ENCODE measurements at regions of chr19 and their contacts with region 1.

Region 1: GRCh38 chr19:3970808-3971598 is at the start of gene DAPK3:
- DNase-seq: peak; percentile 99
- H3K4me3 ChIP-seq: peak within 1 kb of the TSS; percentile 95 to 100 (median 98)
- H3K27ac ChIP-seq: peak within 1 kb of the TSS; percentile 100
- H3K4me1 ChIP-seq: peaks cover 0 to 48% (median 42%) of the 10 kb centered on the region in 4 donors
- H3K27me3 ChIP-seq: no peaks in the 10 kb centered on the region
- CTCF ChIP-seq: no peak
- EP300 ChIP-seq: no peak
- POLR2A ChIP-seq: peak; percentile 80 to 93
- total RNA-seq, gene DAPK3: 91.3 to 167 (median 125) TPM

Region 2: DNA sequence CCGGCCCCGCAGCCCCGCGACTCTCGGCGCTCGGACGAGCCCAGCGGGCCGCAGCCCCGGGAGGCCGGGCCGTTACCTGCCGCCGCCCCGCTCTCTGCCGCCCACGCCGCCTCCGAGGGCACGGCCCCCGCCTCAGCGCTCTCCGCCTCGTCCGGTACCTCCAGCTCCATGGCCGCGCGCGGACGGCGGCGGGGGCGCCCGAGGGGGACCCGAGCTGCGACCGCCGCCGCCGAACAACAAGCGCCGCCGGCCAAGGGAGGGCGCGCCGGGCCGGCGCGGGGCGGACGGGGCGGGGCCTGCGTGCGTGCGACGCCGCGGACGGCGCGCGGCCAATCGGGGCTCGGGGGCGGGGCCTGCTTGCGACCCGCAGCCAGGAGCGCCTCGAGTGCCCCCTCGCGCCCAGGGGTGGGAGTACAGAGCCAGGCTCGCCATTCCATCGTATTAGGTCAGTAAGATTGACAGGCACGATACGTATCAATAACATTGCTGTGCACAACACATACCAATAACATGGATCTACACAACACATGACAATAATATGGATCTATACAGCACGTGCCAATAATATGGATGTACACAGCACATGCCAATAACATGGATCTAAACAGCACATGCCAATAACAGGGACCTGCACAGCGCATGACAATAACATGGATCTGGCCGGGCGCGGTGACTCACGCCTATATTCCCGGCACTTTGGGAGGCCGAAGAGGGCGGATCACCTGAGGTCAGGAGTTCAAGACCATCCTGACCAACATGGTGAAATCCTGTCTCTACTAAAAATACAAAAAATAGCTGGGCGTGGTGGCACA is 270.6 kb before region 1 on chr19 and contains the start of gene PIP5K1C:
- intact Hi-C with region 1: loop called (anchors 10 kb)
- DNase-seq: peak; percentile 94
- H3K4me3 ChIP-seq: peak within 1 kb of the TSS; percentile 64 to 98 (median 95)
- H3K27ac ChIP-seq: peak within 1 kb of the TSS; percentile 85 to 99 (median 92)
- H3K4me1 ChIP-seq: peaks cover 0 to 29% (median 24%) of the 10 kb centered on the region in 4 donors
- H3K27me3 ChIP-seq: no peaks in the 10 kb centered on the region
- CTCF ChIP-seq: peak; percentile 72 to 82 (median 74)
- EP300 ChIP-seq: no peak
- POLR2A ChIP-seq: no peak
- total RNA-seq, gene PIP5K1C: 27.8 to 68.7 (median 44.2) TPM

Region 3: DNA sequence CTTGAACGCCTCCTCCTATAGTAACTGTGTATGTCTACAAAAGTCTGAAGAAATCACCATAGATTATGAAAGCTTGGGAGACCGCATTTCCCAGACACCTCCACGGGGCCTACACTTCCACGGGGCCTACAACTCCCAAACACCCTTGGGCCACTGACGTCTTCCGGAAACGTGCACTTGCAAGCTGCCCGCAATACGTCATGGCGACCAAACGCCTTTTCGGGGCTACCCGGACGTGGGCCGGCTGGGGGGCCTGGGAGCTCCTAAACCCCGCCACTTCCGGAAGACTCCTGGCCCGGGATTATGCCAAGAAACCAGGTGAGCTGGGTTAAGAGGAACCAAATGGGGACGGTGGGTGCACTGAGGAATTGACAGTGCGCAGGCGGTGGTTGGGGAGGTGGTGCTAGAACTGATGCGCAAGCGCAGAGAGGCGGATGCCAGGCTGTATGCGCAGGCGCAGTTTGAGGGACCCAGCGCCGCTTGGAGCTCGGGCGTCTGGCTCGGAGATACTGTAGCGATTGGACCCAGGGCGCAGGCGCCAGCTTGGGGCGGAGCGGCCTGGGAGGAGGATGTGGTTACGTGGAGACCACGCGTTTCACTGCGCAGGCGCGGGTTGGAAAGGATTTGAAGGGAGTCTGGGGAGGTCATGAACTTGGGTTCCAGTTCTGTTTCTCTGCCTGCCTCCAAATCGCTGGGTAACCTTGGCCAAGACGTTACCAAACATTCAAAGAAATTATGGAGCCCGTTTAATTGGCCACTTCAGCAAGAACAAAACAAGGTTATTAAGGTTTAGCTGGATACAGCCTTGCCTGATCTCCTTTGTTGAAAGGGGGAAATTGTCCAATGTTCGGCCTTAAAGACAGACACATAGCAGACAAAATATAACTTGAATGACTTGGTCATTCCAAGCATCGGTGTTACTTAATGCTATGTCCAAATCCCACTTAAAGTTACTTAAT is 208.2 kb before region 1 on chr19 and contains the start of gene MRPL54:
- intact Hi-C with region 1: loop called (anchors 5 kb)
- DNase-seq: peak; percentile 100
- H3K4me3 ChIP-seq: peak within 1 kb of the TSS; percentile 78 to 92 (median 88)
- H3K27ac ChIP-seq: peak within 1 kb of the TSS; percentile 95 to 98 (median 96)
- H3K4me1 ChIP-seq: peaks cover 0 to 46% (median 37%) of the 10 kb centered on the region in 4 donors
- H3K27me3 ChIP-seq: no peaks in the 10 kb centered on the region
- CTCF ChIP-seq: no peak
- EP300 ChIP-seq: peak in 1 of 4 donors; percentile 44
- POLR2A ChIP-seq: peak in 1 of 2 donors; percentile 73
- total RNA-seq, gene MRPL54: 80.6 to 123 (median 103) TPM

Region 4: GRCh38 chr19:4014541-4015491 is 43.8 kb after region 1 on chr19:
- intact Hi-C with region 1: no loop called
- DNase-seq: peak; percentile 77
- H3K4me3 ChIP-seq: peak overlapping the region in 3 of 4 donors; percentile 6 to 35 (median 32)
- H3K27ac ChIP-seq: peak overlapping the region; percentile 68 to 86 (median 84)
- H3K4me1 ChIP-seq: peaks cover 0 to 91% (median 90%) of the 10 kb centered on the region in 4 donors
- H3K27me3 ChIP-seq: no peaks in the 10 kb centered on the region
- CTCF ChIP-seq: no peak
- EP300 ChIP-seq: no peak
- POLR2A ChIP-seq: no peak

Region 5: DNA sequence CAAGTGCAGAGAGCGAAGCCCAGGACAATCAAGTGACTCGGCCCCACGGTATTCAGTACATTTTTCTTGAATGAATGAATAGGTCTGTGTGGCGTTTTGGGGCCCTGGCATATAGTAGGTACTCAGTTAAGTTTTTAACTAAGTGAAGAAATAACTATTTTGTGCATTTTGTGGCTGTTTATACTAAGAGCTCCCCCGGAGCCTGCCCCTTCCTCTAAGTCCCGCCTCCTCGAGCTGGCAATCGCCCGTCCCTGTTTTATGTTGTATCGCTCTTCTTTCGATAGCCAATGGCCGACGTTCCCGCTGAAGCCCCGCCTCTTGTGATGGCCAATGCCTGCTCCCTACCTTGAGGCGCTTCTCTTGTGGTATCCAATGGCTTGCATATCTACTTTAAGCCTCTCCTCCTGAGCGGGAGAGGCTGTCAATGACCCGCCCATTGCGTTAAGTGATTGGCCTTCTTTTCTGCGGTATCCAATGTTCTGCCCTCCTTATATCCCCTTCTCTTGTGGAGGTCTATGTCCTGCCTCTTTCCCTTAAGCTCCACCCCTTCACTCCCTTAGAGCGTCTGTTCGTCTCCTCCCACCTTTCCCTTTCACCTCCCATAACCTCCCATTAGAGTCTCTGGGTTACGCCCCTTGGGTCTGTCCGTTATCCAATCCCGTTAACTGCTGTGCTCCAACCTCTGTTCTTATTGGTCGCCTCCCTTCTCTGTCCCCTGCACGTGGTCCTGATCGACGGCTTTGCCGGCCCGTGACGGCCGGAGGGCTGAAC is 500.6 kb after region 1 on chr19:
- intact Hi-C with region 1: loop called (anchors 5 kb)
- DNase-seq: peak; percentile 100
- H3K4me3 ChIP-seq: peak overlapping the region; percentile 43 to 100 (median 96)
- H3K27ac ChIP-seq: peak overlapping the region; percentile 86 to 95 (median 88)
- H3K4me1 ChIP-seq: peaks cover 0 to 33% (median 27%) of the 10 kb centered on the region in 4 donors
- H3K27me3 ChIP-seq: no peaks in the 10 kb centered on the region
- CTCF ChIP-seq: no peak
- EP300 ChIP-seq: no peak
- POLR2A ChIP-seq: peak in 1 of 2 donors; percentile 33

Region 6: GRCh38 chr19:4811328-4812131 is 840.5 kb after region 1 on chr19:
- intact Hi-C with region 1: no loop called
- DNase-seq: peak; percentile 87
- H3K4me3 ChIP-seq: no peak overlapping the region
- H3K27ac ChIP-seq: peak overlapping the region in 2 of 4 donors; percentile 18 to 88
- H3K4me1 ChIP-seq: peaks cover 0 to 39% (median 24%) of the 10 kb centered on the region in 4 donors
- H3K27me3 ChIP-seq: no peaks in the 10 kb centered on the region
- CTCF ChIP-seq: peak; percentile 73 to 88 (median 84)
- EP300 ChIP-seq: no peak
- POLR2A ChIP-seq: no peak

Measured in sigmoid colon (tissue), 7 donors.